Ascending aorta (tissue), 2 donors: ENCODE measurements at regions of chr15 and their contacts with region 1.

Region 1: GRCh38 chr15:68304589-68305337 is 27.2 kb downstream of the FEM1B start:
- DNase-seq: peak in 1 of 2 donors; percentile 62
- H3K4me3 ChIP-seq: no peak overlapping the region
- H3K27ac ChIP-seq: peak overlapping the region; percentile 61 to 85
- H3K4me1 ChIP-seq: peaks cover 3 to 32% of the 10 kb centered on the region in 2 donors
- H3K27me3 ChIP-seq: no peaks in the 10 kb centered on the region
- CTCF ChIP-seq: no peak

Region 2: GRCh38 chr15:68252925-68253534 is 51.7 kb before region 1 on chr15:
- intact Hi-C with region 1: loop called (anchors 1 kb)
- DNase-seq: peak in 1 of 2 donors; percentile 69
- H3K4me3 ChIP-seq: no peak overlapping the region
- H3K27ac ChIP-seq: no peak overlapping the region
- H3K4me1 ChIP-seq: peaks cover 5 to 11% of the 10 kb centered on the region in 2 donors
- H3K27me3 ChIP-seq: no peaks in the 10 kb centered on the region
- CTCF ChIP-seq: peak; percentile 84 to 89 (median 88)

Region 3: DNA sequence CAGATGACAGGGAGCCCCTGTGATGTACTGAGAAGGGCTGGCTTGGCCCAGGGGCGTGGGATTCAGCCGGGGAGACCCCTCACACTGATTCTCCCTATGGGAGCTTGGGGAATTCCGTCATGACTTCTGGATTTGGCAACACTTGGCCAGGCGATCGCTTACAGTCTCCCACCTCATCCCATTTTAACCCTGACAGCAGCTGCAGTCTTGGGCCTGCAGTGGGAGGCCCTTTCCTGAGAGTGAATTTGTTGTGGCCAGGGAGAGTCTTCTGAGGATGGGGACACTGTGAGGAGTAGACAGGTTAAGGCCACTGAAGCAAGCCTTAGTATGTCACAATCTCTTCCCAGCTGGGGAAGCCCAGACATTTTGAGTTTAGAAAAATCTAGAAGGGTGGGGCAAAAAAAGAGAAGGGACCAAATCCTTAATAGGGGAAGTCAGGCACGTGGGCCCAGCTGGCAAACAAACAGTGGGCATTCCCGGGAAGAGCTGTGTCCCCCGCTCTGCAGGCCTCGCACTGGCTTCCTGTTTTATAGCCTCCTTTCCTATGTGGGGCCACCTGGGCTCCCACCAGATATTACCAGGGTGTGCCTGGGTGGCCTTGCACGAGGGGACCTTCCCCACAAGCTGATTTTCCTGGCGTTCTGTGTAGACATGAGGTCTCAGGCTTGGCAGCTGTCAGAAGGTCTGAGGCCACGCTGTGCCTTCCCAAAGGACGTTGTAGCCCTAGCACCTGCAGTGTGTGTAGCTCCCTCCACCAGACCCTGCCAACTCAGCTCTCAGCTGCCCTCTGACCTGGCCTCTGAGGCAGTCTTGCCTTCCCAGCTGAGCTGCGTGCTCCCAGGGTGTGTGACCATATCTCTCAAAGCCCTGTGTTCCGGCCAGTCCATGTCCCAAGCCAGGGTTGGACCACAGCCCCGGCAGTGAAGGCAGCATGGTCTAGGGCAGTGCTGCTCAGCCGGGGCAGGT is 37.3 kb after region 1 on chr15:
- intact Hi-C with region 1: no loop called
- DNase-seq: no peak
- H3K4me3 ChIP-seq: no peak overlapping the region
- H3K27ac ChIP-seq: peak overlapping the region; percentile 96 to 98
- H3K4me1 ChIP-seq: peaks cover 23 to 52% of the 10 kb centered on the region in 2 donors
- H3K27me3 ChIP-seq: no peaks in the 10 kb centered on the region
- CTCF ChIP-seq: no peak

Region 4: DNA sequence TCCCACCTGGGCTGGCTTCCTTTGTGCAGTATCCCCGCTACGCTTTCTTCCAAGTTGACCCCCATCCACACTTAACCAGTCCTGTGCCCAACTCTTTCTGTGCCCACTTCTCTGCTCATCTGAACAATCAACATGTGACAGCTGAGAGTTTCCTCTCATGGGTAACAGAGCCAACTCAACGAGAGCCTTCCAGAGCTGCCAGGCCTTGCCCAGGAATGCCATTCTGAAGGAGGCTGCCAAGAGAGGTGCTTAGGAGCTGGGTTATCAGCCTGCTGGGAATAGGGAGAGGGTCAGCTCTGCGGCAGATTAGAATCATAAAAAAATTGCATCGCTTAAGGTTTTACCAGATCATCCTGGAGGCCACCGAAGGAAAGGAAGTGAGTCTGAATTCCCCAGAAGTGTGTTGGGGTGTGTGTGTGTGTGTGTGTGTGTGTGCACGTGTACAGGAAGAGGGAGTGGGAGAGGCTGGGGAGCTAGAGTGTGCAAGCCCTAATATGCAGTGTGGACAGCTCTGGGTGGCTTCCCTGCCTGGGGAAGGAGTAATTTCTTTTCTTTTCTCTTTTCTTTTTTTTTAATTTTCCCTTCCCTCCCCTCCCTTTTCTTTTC is 60.5 kb after region 1 on chr15:
- intact Hi-C with region 1: loop called (anchors 2 kb)
- DNase-seq: no peak
- H3K4me3 ChIP-seq: no peak overlapping the region
- H3K27ac ChIP-seq: peak overlapping the region; percentile 96
- H3K4me1 ChIP-seq: peaks cover 25 to 71% of the 10 kb centered on the region in 2 donors
- H3K27me3 ChIP-seq: no peaks in the 10 kb centered on the region
- CTCF ChIP-seq: no peak

Region 5: GRCh38 chr15:68431792-68432401 is 127.1 kb after region 1 on chr15 and contains the start of gene ITGA11:
- intact Hi-C with region 1: loop called (anchors 5 kb)
- DNase-seq: peak in 1 of 2 donors; percentile 89
- H3K4me3 ChIP-seq: peak within 1 kb of the TSS; percentile 69 to 83
- H3K27ac ChIP-seq: peak within 1 kb of the TSS; percentile 89 to 93
- H3K4me1 ChIP-seq: peaks cover 3 to 23% of the 10 kb centered on the region in 2 donors
- H3K27me3 ChIP-seq: no peaks in the 10 kb centered on the region
- CTCF ChIP-seq: no peak
- total RNA-seq, gene ITGA11: 136 TPM

Region 6: DNA sequence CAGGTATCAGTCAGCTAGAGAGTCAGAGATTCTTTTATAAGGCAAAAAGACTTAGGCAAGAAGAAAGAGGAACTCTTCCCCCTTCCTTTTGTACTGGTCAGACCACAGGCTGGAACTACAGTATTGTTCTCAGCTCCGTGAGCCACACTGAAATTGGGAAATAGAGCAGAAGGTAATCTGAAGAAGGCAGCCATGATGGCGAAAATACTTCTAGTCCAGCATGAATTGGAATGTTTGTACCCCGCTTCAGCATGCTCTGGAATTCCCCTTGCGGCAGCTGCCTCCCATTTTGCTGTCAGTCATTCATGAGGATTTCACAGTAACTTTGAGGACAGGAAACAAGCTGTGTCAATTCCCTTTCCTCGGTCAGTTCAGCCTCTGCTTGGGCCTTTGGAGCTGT is 370.2 kb after region 1 on chr15:
- intact Hi-C with region 1: loop called (anchors 2 kb)
- DNase-seq: no peak
- H3K4me3 ChIP-seq: no peak overlapping the region
- H3K27ac ChIP-seq: no peak overlapping the region
- H3K4me1 ChIP-seq: no peaks in the 10 kb centered on the region
- H3K27me3 ChIP-seq: no peaks in the 10 kb centered on the region
- CTCF ChIP-seq: no peak